ENCODE measurements at regions of chr3 and their contacts with region 1.

Region 1: GRCh38 chr3:194604834-194605233 is 28.4 kb downstream of the TMEM44 start:
- DNase-seq: peak in 1 of 3 donors; percentile 19
- H3K4me3 ChIP-seq: no peak overlapping the region
- H3K27ac ChIP-seq: no peak overlapping the region
- H3K4me1 ChIP-seq: no peaks in the 10 kb centered on the region
- H3K27me3 ChIP-seq: no peaks in the 10 kb centered on the region

Region 2: DNA sequence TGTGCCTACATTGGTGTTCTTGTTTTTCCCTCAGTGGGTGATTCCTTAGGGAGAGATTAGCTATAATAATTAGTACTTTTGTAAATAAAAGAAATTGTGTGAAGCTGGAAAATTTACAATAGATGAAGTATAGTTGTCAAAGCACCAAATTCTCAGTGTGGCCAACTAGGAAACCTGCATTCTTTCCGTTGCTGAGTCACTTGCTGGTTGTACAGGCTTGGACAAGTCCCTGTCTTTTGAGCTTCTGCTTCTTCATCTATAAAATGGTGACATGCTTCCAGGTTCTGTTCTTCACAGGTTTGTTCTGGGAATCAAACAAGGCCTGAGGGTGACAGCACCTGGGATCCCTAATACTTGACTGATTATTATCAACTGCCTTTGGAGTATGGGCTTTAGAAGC is 653.0 kb before region 1 on chr3:
- CTCF ChIA-PET with region 1: no interaction called
- POLR2A ChIA-PET with region 1: no interaction called
- DNase-seq: no peak
- H3K4me3 ChIP-seq: no peak overlapping the region
- H3K27ac ChIP-seq: no peak overlapping the region
- H3K4me1 ChIP-seq: peaks cover 0 to 10% (median 3%) of the 10 kb centered on the region in 4 experiments
- H3K27me3 ChIP-seq: peaks cover 0 to 1% (median 0%) of the 10 kb centered on the region in 5 experiments

Region 3: DNA sequence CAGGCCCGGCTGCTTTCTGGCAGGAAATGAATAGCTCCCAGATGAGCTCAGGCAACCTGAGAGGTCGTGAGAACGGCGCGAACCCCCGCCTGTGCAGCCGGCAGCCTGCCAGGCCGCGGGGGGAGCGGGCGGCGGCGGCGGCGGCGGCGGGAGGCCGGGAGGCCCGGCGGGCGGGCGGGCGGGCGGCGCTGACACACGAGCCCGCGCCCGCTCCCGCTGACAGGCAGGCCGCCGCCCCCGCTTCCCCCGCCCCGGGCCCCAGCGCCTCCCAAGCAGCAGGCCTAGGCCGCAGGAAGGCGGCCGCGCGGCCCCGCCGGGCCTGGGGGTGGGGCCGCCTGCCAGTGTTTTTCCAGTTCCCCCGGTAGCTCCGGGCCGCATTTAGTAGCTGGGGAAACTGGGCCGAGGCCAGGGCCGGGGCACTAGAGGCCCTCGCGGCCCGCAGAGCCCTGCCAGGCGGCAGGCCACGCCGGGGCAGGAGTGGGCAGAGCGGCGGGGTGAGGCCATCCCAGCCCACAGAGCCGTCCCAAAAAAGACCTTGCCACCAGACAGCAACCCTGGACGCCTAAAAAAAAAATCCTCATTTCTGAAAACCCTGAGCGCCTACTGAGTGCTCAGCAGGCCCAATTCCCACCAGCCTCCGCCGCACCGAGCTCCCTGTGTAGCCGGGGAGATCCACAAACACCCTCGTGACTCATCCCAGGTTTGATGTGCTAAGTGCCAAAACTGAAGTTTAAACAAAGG is 463.2 kb before region 1 on chr3:
- CTCF ChIA-PET with region 1: no interaction called
- POLR2A ChIA-PET with region 1: no interaction called
- DNase-seq: peak; percentile 64 to 84 (median 79)
- H3K4me3 ChIP-seq: peak overlapping the region in 6 of 7 experiments; percentile 44 to 70 (median 57)
- H3K27ac ChIP-seq: peak overlapping the region in 1 of 2 experiments; percentile 81
- H3K4me1 ChIP-seq: peaks cover 21 to 61% (median 55%) of the 10 kb centered on the region in 4 experiments
- H3K27me3 ChIP-seq: peaks cover 0 to 32% (median 0%) of the 10 kb centered on the region in 5 experiments

Region 4: GRCh38 chr3:194621947-194622346 is 17.1 kb after region 1 on chr3:
- CTCF ChIA-PET with region 1: interaction called, 10 read pairs
- POLR2A ChIA-PET with region 1: no interaction called
- DNase-seq: no peak
- H3K4me3 ChIP-seq: no peak overlapping the region
- H3K27ac ChIP-seq: no peak overlapping the region
- H3K4me1 ChIP-seq: no peaks in the 10 kb centered on the region
- H3K27me3 ChIP-seq: no peaks in the 10 kb centered on the region

Region 5: GRCh38 chr3:195001961-195002861 is 397.4 kb after region 1 on chr3:
- CTCF ChIA-PET with region 1: no interaction called
- POLR2A ChIA-PET with region 1: no interaction called
- DNase-seq: peak; percentile 64 to 83 (median 79)
- H3K4me3 ChIP-seq: peak overlapping the region in 1 of 7 experiments; percentile 20
- H3K27ac ChIP-seq: no peak overlapping the region
- H3K4me1 ChIP-seq: peaks cover 7 to 38% (median 25%) of the 10 kb centered on the region in 4 experiments
- H3K27me3 ChIP-seq: no peaks in the 10 kb centered on the region

Measured in common myeloid progenitor, CD34-positive (primary cell).